ENCODE measurements at regions of chr5 and their contacts with region 1.

Region 1: GRCh38 chr5:170100066-170100943 is 5.4 kb upstream of the FOXI1 start:
- ATAC-seq: peak; percentile 67 to 89 (median 72)
- H3K4me3 ChIP-seq: no peak overlapping the region
- H3K27ac ChIP-seq: no peak overlapping the region
- H3K4me1 ChIP-seq: peaks cover 0 to under 1% of the 10 kb centered on the region in 2 donors

Region 2: DNA sequence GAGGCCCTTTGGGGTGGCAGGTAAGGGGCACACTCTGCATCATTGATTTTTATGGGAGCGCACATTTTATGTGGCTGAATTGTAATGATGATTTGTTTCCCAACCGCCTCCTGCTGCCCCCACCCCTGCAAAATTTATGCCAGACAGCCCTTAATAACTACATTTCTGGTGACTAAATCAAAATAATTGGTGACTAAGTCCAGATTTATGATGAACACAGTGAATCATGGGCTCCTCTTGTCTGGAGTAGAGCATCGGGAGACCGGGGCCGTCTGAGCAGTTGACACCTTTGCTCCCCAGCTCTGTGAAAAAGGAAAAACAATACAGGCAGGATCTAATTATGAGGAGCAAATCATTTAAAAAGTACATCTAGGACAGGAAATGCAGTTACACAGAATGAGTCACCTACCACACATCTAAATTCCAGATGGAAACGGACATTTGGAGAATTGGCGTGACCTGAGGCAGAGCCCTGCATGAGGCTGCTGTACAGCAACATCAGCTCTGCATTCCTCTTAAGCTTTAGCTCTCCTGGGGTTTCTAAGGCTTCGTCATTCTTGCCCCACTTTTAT is 404.3 kb before region 1 on chr5:
- in situ Hi-C with region 1: loop called in 1 of 9 experiments (anchors 25 kb)
- ATAC-seq: peak; percentile 94 to 98 (median 96)
- H3K4me3 ChIP-seq: no peak overlapping the region
- H3K27ac ChIP-seq: no peak overlapping the region
- H3K4me1 ChIP-seq: peaks cover 0 to 14% of the 10 kb centered on the region in 2 donors

Region 3: GRCh38 chr5:170183816-170184687 is 83.7 kb after region 1 on chr5:
- in situ Hi-C with region 1: loop called in 2 of 9 experiments (anchors 5 to 25 kb)
- ATAC-seq: peak; percentile 58 to 99 (median 85)
- H3K4me3 ChIP-seq: no peak overlapping the region
- H3K27ac ChIP-seq: no peak overlapping the region
- H3K4me1 ChIP-seq: peaks cover 5 to 13% of the 10 kb centered on the region in 2 donors

Region 4: DNA sequence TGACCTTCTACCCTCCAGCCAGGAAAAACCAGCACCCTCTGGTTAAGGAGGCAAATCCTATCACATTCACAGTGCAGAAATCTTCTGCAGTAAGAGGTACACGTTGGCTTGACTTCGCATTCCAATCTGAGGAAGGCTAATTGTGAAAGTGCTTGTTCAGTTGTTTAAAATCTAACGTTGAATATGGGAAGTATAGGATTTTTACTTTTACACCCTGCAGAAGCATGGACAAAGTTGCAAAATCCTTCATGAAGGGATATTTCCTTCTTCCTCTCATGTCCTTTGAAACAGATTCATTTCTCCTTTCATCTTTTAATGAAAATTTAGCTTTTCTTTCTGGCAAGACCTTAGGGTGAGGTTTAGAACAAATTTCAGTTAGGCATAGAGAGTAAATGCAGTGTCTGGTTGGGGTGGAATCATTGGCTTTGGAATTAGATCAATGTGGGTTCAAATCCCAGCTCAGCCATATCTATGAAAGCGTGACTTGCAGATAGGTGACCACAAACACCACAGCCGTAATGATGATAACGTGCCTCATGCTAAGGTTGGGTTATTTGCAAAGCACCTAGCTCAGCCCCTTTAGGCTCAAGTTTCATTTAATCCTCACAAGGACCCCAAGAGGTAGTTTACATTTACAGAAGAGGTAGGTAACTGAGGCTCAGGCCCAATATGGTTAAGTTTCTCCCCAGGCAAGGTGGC is 90.3 kb after region 1 on chr5:
- in situ Hi-C with region 1: loop called in 3 of 9 experiments (anchors 5 to 25 kb)
- ATAC-seq: no peak
- H3K4me3 ChIP-seq: no peak overlapping the region
- H3K27ac ChIP-seq: no peak overlapping the region
- H3K4me1 ChIP-seq: peaks cover 0 to under 1% of the 10 kb centered on the region in 2 donors

Region 5: GRCh38 chr5:170216266-170216864 is 116.1 kb after region 1 on chr5:
- in situ Hi-C with region 1: loop called in 1 of 9 experiments (anchors 25 kb)
- ATAC-seq: peak; percentile 68 to 84 (median 78)
- H3K4me3 ChIP-seq: no peak overlapping the region
- H3K27ac ChIP-seq: no peak overlapping the region
- H3K4me1 ChIP-seq: peaks cover 16 to 19% of the 10 kb centered on the region in 2 donors

Region 6: GRCh38 chr5:170420780-170421412 is 320.6 kb after region 1 on chr5:
- in situ Hi-C with region 1: loop called in 3 of 9 experiments (anchors 25 kb)
- ATAC-seq: peak; percentile 57 to 78 (median 72)
- H3K4me3 ChIP-seq: no peak overlapping the region
- H3K27ac ChIP-seq: peak overlapping the region in 1 of 2 donors; percentile 65
- H3K4me1 ChIP-seq: peaks cover 39 to 44% of the 10 kb centered on the region in 2 donors

Region 7: DNA sequence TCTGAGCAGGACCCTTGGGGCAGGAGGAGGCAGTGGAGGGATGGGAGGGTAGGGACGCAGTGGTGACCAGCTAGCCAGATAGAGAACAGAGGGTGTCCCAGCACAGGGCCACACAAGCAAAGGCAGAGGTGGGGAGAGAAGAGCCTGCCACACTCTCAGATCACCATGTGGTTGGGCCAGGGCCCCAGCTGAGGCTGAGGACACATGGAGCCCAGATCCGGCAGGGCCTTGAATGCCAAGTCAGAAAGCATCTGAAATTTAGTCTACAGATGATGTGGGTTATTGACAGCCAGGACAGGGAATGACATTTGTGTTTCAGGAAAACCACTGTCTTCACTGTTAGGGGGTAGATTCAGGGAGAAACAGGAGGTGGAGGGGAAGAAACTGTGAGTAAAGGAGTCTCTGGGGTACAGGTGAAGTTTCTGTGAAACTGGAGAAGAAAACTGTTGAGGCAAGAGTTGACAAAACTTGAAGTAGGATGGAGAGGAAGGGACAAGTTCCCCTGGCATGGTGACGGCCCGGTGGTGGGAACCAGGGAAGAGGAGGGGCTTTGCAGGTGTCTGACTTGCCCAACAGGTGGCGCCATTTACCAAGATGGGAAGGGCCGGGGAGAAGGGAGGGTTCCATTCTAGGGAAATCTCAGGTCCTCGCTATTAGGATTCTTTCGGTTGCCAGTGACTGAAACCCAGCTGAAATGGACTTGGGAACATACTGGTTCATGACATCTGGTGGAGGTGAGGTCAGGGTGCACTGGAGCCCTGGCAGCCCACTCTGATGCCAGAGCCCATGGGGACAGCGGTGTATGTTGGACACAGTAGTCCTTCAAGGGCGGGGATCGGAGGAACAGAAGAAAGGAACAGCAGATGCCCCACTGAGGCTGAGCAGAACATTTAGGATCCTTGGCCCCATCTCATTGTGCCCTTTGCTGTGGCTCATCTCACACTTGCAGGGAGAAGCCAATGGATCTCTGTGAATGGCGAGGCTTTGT is 503.6 kb after region 1 on chr5:
- in situ Hi-C with region 1: loop called in 1 of 9 experiments (anchors 25 kb)
- ATAC-seq: peak; percentile 67 to 99 (median 81)
- H3K4me3 ChIP-seq: no peak overlapping the region
- H3K27ac ChIP-seq: no peak overlapping the region
- H3K4me1 ChIP-seq: peaks cover 34 to 49% of the 10 kb centered on the region in 2 donors

Measured in motor neuron (in vitro differentiated cells).